ENCODE measurements at regions of chr5 and their contacts with region 1.

Region 1: DNA sequence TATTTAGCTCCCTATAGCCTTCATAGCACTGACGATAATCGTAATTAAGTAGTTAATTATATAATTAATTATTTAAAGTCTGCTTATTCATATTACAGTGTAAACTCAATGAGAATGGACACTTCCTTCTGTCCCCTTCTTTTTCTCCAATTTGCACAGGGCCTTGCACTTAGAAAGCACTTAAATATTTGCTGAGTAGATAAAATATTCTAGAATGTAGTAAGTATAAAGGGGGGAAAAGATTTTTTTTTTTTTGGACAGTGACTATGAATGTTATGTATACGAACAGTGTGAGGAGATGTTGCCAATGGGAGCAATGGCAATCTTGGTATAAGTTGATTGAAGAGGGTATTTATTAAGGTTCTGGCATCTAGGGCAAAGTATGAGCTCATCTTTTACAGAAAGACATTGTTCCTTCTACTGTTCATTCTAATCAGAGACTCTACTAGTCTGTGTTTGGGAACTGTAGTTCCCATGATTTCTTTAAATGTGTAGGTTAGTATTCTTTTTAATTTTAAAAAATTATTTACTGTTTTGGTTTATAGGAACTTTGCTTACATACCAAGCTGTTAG is 49.4 kb downstream of the YTHDC2 start:
- DNase-seq: no peak
- ATAC-seq: no peak
- H3K4me3 Mint-ChIP-seq: no peak overlapping the region
- H3K27ac Mint-ChIP-seq: no peak overlapping the region
- H3K4me1 Mint-ChIP-seq: no peaks in the 10 kb centered on the region
- H3K27me3 Mint-ChIP-seq: no peaks in the 10 kb centered on the region
- CTCF ChIP-seq: no peak

Region 2: DNA sequence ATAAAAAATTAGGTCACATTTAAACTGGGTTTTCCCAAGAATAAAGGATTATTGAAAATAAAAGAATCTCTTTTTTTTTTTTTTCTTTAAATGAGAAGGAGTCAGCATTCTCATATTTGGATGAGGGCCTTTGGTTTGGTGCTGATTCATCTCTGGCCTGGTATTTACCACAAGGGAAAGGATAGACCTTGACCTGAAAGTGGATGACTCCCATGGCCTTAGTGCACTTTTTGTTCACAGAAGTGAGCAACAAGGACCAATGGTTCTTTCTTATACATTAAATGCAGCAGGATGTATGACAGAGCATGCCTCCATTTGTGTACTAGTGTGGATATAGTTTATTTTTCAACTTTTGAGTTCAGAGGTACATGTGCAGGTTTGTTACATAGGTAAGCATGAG is 42.5 kb before region 1 on chr5:
- CTCF ChIA-PET with region 1: no interaction called
- POLR2A ChIA-PET with region 1: no interaction called
- intact Hi-C with region 1: loop called (anchors 5 kb)
- DNase-seq: no peak
- ATAC-seq: no peak
- H3K4me3 Mint-ChIP-seq: no peak overlapping the region
- H3K27ac Mint-ChIP-seq: no peak overlapping the region
- H3K4me1 Mint-ChIP-seq: peaks cover 52% of the 10 kb centered on the region
- H3K27me3 Mint-ChIP-seq: no peaks in the 10 kb centered on the region
- CTCF ChIP-seq: no peak

Region 3: DNA sequence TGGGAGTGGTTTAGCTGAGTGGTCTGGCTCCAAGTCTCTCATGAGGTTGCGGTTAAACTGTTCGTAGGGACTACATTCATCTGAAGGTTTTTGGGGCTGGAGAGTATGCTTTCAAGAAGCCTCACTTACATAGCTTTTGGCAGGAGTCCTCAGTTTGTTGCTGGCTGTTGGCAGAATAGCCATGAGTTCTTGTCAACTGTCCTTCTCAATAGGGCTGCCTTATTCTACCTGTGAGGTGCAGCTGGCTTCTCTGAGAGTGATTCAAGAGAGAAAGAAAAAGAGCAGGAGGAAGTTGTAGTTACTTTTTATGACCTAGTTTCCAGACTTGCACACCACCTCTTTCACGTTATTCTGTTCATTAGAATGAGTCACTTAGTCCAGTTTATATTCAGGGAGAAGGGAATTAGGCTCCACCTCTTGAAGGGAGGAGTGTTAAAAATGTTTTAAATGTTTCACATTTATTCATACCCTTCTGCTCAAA is 16.2 kb before region 1 on chr5:
- CTCF ChIA-PET with region 1: no interaction called
- POLR2A ChIA-PET with region 1: no interaction called
- intact Hi-C with region 1: loop called (anchors 2 kb)
- DNase-seq: no peak
- ATAC-seq: no peak
- H3K4me3 Mint-ChIP-seq: no peak overlapping the region
- H3K27ac Mint-ChIP-seq: no peak overlapping the region
- H3K4me1 Mint-ChIP-seq: no peaks in the 10 kb centered on the region
- H3K27me3 Mint-ChIP-seq: no peaks in the 10 kb centered on the region
- CTCF ChIP-seq: no peak

Region 4: GRCh38 chr5:113760486-113760885 is 197.6 kb after region 1 on chr5:
- CTCF ChIA-PET with region 1: no interaction called
- POLR2A ChIA-PET with region 1: no interaction called
- intact Hi-C with region 1: no loop called
- DNase-seq: no peak
- ATAC-seq: no peak
- H3K4me3 Mint-ChIP-seq: no peak overlapping the region
- H3K27ac Mint-ChIP-seq: no peak overlapping the region
- H3K4me1 Mint-ChIP-seq: no peaks in the 10 kb centered on the region
- H3K27me3 Mint-ChIP-seq: no peaks in the 10 kb centered on the region
- CTCF ChIP-seq: no peak